HCT116 (cell line): ENCODE measurements at regions of chr2 and their contacts with region 1.

Region 1: GRCh38 chr2:135913727-135914365 is 37.6 kb upstream of the MCM6 start:
- DNase-seq: peak; percentile 19
- ATAC-seq: peak; percentile 59; the same call in 1 of the 2 replicates
- H3K4me3 ChIP-seq: no peak overlapping the region
- H3K27ac ChIP-seq: no peak overlapping the region
- H3K4me1 ChIP-seq: no peaks in the 10 kb centered on the region
- H3K27me3 ChIP-seq: no peaks in the 10 kb centered on the region
- CTCF ChIP-seq: peak; percentile 42 to 71 (median 53); a peak in 5 of 6 replicates
- POLR2A ChIP-seq: no peak
- RAD21 ChIP-seq: peak; percentile 76

Region 2: DNA sequence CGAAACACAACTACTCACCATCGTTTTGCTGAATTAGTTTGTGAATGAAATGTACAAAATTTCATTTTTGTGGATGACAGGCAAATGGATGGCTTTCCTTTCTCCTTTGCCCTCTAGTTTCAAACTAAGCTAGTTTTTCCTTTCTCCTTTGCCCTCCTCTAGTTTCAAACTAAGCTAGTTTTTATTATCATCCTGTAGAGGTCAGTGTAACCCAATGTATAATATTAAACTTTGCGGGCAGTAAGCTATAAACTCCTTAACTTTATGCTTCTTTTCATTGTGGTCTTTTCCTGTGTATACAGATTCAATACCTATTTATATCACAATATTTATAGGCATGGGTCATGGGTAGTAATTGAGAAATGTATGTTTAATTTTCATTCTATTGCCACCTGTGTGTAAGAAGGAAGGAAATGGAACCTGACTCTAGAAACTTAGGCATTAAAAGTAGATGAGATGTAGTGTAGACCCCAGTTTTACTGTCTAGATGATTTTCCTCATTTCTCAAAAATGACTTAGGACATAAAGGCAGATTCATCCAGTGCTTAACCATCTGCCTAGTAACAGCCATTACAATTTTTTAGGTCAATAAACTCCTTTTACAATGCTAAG is 924.7 kb before region 1 on chr2:
- CTCF ChIA-PET with region 1: interaction called, 10 read pairs
- POLR2A ChIA-PET with region 1: no interaction called
- RAD21 ChIA-PET with region 1: no interaction called
- intact Hi-C with region 1: loop called (anchors 5 kb)
- DNase-seq: peak; percentile 18
- ATAC-seq: peak; percentile 85
- H3K4me3 ChIP-seq: no peak overlapping the region
- H3K27ac ChIP-seq: no peak overlapping the region
- H3K4me1 ChIP-seq: no peaks in the 10 kb centered on the region
- H3K27me3 ChIP-seq: peaks cover 21% of the 10 kb centered on the region; the same call in 1 of the 2 replicates
- CTCF ChIP-seq: peak; percentile 31 to 65 (median 45); a peak in 4 of 6 replicates
- POLR2A ChIP-seq: no peak
- RAD21 ChIP-seq: peak; percentile 71

Region 3: GRCh38 chr2:135820003-135820618 is 93.7 kb before region 1 on chr2:
- CTCF ChIA-PET with region 1: no interaction called
- POLR2A ChIA-PET with region 1: no interaction called
- RAD21 ChIA-PET with region 1: no interaction called
- intact Hi-C with region 1: no loop called
- DNase-seq: no peak
- ATAC-seq: no peak
- H3K4me3 ChIP-seq: no peak overlapping the region
- H3K27ac ChIP-seq: no peak overlapping the region
- H3K4me1 ChIP-seq: no peaks in the 10 kb centered on the region
- H3K27me3 ChIP-seq: no peaks in the 10 kb centered on the region
- CTCF ChIP-seq: no peak
- POLR2A ChIP-seq: no peak
- RAD21 ChIP-seq: no peak

Region 4: GRCh38 chr2:136117909-136118818 is 204.3 kb after region 1 on chr2 and contains the start of gene CXCR4:
- CTCF ChIA-PET with region 1: no interaction called
- POLR2A ChIA-PET with region 1: no interaction called
- RAD21 ChIA-PET with region 1: no interaction called
- intact Hi-C with region 1: loop called (anchors 10 kb)
- DNase-seq: peak; percentile 34
- ATAC-seq: peak; percentile 67
- H3K4me3 ChIP-seq: peak within 1 kb of the TSS; percentile 44 to 59
- H3K27ac ChIP-seq: no peak within 1 kb of the TSS
- H3K4me1 ChIP-seq: peaks cover 11 to 28% of the 10 kb centered on the region in 2 experiments; a peak in 3 of 4 replicates
- H3K27me3 ChIP-seq: peaks cover 63% of the 10 kb centered on the region
- CTCF ChIP-seq: no peak
- POLR2A ChIP-seq: no peak
- RAD21 ChIP-seq: no peak
- total RNA-seq, gene CXCR4: 1.3 TPM

Region 5: DNA sequence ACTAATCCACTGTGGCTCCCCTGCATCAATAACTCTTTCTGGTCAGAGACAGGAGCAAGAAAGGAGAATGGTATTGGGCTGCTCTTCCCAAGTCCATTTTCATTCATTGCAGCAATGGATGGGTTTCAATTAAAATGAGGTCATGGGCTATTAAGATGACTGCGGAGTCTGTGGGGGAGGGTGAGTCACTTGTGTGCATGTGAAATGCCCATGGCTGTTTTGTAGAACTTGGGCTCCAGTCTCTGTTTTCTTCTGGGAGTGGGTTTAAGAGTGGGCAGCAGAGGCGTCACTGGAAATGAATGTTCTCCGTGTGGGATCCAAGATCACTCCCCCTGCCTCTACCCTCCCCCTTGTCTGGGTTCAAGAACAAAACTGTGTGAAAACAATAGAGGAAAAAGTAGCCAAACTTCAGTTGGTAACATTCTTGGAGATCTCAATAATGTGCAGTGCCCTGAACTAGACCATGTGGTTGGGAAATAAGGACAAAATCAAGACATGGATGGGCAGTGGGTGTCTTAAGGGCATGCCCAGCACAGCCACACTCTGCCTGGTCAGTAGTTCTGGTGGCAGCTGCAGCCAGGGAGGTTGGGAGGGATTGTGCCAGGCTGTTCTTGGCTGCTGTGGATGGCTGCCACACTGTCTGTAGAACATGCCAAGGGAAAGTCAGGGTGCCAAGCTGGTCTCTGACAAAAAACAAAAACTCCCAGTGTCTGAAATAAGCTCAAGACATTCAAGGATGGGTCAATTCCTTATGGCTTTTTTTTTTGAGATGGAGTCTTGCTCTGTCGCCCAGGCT is 272.3 kb after region 1 on chr2:
- CTCF ChIA-PET with region 1: no interaction called
- POLR2A ChIA-PET with region 1: no interaction called
- RAD21 ChIA-PET with region 1: no interaction called
- intact Hi-C with region 1: no loop called
- DNase-seq: no peak
- ATAC-seq: no peak
- H3K4me3 ChIP-seq: no peak overlapping the region
- H3K27ac ChIP-seq: no peak overlapping the region
- H3K4me1 ChIP-seq: no peaks in the 10 kb centered on the region
- H3K27me3 ChIP-seq: peaks cover 4% of the 10 kb centered on the region; the same call in 1 of the 2 replicates
- CTCF ChIP-seq: no peak
- POLR2A ChIP-seq: no peak
- RAD21 ChIP-seq: no peak

Region 6: GRCh38 chr2:136378712-136379595 is 465.1 kb after region 1 on chr2:
- CTCF ChIA-PET with region 1: interaction called, 44 read pairs
- POLR2A ChIA-PET with region 1: no interaction called
- RAD21 ChIA-PET with region 1: interaction called in 1 of 2 experiments, 10 read pairs
- intact Hi-C with region 1: loop called (anchors 1 kb)
- DNase-seq: peak; percentile 39
- ATAC-seq: peak; percentile 92
- H3K4me3 ChIP-seq: no peak overlapping the region
- H3K27ac ChIP-seq: no peak overlapping the region
- H3K4me1 ChIP-seq: no peaks in the 10 kb centered on the region
- H3K27me3 ChIP-seq: no peaks in the 10 kb centered on the region
- CTCF ChIP-seq: peak; percentile 82 to 83 (median 83)
- POLR2A ChIP-seq: no peak
- RAD21 ChIP-seq: peak; percentile 96

Region 7: GRCh38 chr2:136384531-136385303 is 470.9 kb after region 1 on chr2:
- CTCF ChIA-PET with region 1: interaction called, 44 read pairs
- POLR2A ChIA-PET with region 1: interaction called, 4 read pairs
- RAD21 ChIA-PET with region 1: interaction called, 6 to 10 read pairs
- intact Hi-C with region 1: no loop called
- DNase-seq: peak; percentile 39
- ATAC-seq: peak; percentile 99
- H3K4me3 ChIP-seq: no peak overlapping the region
- H3K27ac ChIP-seq: no peak overlapping the region
- H3K4me1 ChIP-seq: no peaks in the 10 kb centered on the region
- H3K27me3 ChIP-seq: peaks cover 16% of the 10 kb centered on the region; the same call in 1 of the 2 replicates
- CTCF ChIP-seq: peak; percentile 68 to 76 (median 69)
- POLR2A ChIP-seq: no peak
- RAD21 ChIP-seq: peak; percentile 89

Region 8: DNA sequence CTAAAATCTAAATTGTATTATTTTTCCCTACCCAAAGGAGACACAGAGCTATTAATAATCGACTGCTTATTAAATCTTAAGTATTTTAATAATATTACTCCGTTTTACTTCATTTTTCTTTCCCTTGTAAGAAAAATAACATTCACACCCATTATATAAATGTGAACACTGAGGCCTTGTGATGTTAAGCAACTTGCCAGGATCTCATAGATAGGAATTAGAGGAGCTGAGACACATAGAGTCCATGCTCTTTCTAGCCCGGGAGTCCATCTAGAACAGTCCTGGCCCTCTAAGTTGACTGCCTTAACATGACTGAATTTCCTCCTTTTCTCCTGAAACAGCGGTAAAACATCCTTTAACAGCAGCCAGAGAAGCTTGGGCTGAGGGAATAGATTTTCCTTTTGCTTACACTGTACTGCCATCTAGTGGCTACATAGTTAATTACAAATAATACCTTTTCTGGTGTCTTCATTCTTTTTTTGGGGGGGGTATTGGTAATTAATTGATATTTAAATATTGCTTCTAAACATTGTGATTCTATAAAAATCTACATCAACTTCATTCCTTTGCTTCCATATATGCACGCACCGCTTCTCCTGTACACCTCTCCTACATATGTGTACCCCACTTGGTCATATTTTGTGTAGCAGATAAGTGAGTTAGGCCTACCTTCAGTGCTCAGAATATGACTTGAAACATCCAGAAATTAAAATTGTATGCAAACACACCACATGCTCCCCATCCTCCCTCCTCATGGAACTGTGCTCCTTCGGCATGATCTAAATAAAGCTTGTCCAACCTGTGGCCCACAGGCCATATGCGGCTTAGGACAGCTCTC is 1924.6 kb after region 1 on chr2:
- CTCF ChIA-PET with region 1: no interaction called
- POLR2A ChIA-PET with region 1: no interaction called
- RAD21 ChIA-PET with region 1: no interaction called
- intact Hi-C with region 1: loop called (anchors 5 kb)
- DNase-seq: peak; percentile 29
- ATAC-seq: peak; percentile 70
- H3K4me3 ChIP-seq: no peak overlapping the region
- H3K27ac ChIP-seq: no peak overlapping the region
- H3K4me1 ChIP-seq: no peaks in the 10 kb centered on the region
- H3K27me3 ChIP-seq: peaks cover 3% of the 10 kb centered on the region; the same call in 1 of the 2 replicates
- CTCF ChIP-seq: peak; percentile 28 to 74 (median 51); a peak in 4 of 6 replicates
- POLR2A ChIP-seq: no peak
- RAD21 ChIP-seq: peak; percentile 80